ENCODE measurements at regions of chr11 and their contacts with region 1.

Region 1: GRCh38 chr11:63768237-63769043 is at the start of gene ZFTA:
- DNase-seq: peak; percentile 78 to 87
- ATAC-seq: peak; percentile 52
- H3K4me3 ChIP-seq: peak within 1 kb of the TSS; percentile 93 to 96
- H3K27ac ChIP-seq: peak within 1 kb of the TSS in 1 of 2 donors; percentile 29
- H3K4me1 ChIP-seq: no peaks in the 10 kb centered on the region
- H3K27me3 ChIP-seq: no peaks in the 10 kb centered on the region
- total RNA-seq, gene ZFTA: 20.1 to 30.9 TPM

Region 2: GRCh38 chr11:63805844-63806415 is 37.5 kb after region 1 on chr11:
- intact Hi-C with region 1: loop called (anchors 5 kb)
- DNase-seq: peak in 1 of 2 donors; percentile 64
- ATAC-seq: peak; percentile 69
- H3K4me3 ChIP-seq: no peak overlapping the region
- H3K27ac ChIP-seq: no peak overlapping the region
- H3K4me1 ChIP-seq: no peaks in the 10 kb centered on the region
- H3K27me3 ChIP-seq: no peaks in the 10 kb centered on the region

Region 3: GRCh38 chr11:63945477-63946163 is 177.2 kb after region 1 on chr11:
- intact Hi-C with region 1: loop called (anchors 5 kb)
- DNase-seq: peak; percentile 82 to 90
- ATAC-seq: peak; percentile 91
- H3K4me3 ChIP-seq: no peak overlapping the region
- H3K27ac ChIP-seq: peak overlapping the region; percentile 1 to 50
- H3K4me1 ChIP-seq: no peaks in the 10 kb centered on the region
- H3K27me3 ChIP-seq: no peaks in the 10 kb centered on the region

Region 4: DNA sequence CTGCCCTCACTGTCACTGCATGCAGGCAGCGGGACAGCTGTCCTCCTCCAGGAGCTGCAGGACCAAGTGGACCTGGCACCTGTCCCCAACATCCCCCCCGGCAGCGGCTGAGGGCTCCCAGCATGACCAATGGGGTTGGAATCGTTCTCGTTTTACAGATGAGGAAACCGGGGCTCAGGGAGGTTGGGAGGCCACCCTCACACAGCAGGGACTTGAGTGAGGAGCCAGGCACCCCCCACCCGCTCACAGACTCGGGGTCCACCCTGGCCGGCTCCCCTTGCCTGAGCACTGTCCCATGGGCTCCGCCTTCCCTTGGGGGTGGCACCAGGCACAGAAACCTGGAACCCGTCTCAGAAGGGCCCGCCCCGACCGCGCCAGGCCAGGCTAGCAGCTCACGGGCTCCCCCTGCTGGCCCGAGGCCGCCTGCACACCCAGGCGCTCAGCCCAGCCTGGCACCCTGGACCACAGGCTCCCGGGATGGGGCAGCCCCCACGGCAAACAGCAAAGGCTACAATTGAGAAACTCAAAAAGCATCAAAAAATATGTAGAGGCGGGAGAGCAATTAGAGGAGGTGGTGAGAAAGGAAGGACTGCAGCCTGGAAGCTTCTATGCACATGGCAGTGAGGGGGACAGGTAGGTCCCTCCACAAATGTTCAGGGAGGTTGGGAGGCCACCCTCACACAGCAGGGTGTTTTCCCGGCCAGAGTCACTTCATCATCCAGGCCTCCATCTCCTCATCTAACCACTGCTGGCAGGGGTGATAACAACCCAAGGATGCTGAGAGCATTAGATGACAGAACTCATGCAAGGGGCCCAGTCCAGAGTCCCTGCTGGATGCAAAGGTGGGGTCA is 384.6 kb after region 1 on chr11:
- intact Hi-C with region 1: loop called in 1 of 2 experiments (anchors 10 kb)
- DNase-seq: peak; percentile 71 to 92
- ATAC-seq: peak; percentile 89
- H3K4me3 ChIP-seq: no peak overlapping the region
- H3K27ac ChIP-seq: no peak overlapping the region
- H3K4me1 ChIP-seq: no peaks in the 10 kb centered on the region
- H3K27me3 ChIP-seq: no peaks in the 10 kb centered on the region